WTC11 (cell line): ENCODE measurements at regions of chr10 and their contacts with region 1.

Region 1: GRCh38 chr10:101840741-101841453 is 2.7 kb downstream of the KCNIP2 start:
- DNase-seq: peak; percentile 94
- ATAC-seq: peak; percentile 54
- H3K4me3 Mint-ChIP-seq: peak overlapping the region; percentile 91
- H3K27ac Mint-ChIP-seq: peak overlapping the region; percentile 79; the same call in 1 of the 2 replicates
- H3K4me1 Mint-ChIP-seq: peaks cover 38% of the 10 kb centered on the region
- H3K27me3 Mint-ChIP-seq: peaks cover 25% of the 10 kb centered on the region
- CTCF ChIP-seq: peak; percentile 93

Region 2: GRCh38 chr10:101629837-101630632 is 210.9 kb before region 1 on chr10:
- CTCF ChIA-PET with region 1: no interaction called
- POLR2A ChIA-PET with region 1: no interaction called
- DNase-seq: no peak
- ATAC-seq: no peak
- H3K4me3 Mint-ChIP-seq: no peak overlapping the region
- H3K27ac Mint-ChIP-seq: no peak overlapping the region
- H3K4me1 Mint-ChIP-seq: peaks cover 6% of the 10 kb centered on the region
- H3K27me3 Mint-ChIP-seq: no peaks in the 10 kb centered on the region; the same call in 1 of the 2 replicates
- CTCF ChIP-seq: no peak

Region 3: DNA sequence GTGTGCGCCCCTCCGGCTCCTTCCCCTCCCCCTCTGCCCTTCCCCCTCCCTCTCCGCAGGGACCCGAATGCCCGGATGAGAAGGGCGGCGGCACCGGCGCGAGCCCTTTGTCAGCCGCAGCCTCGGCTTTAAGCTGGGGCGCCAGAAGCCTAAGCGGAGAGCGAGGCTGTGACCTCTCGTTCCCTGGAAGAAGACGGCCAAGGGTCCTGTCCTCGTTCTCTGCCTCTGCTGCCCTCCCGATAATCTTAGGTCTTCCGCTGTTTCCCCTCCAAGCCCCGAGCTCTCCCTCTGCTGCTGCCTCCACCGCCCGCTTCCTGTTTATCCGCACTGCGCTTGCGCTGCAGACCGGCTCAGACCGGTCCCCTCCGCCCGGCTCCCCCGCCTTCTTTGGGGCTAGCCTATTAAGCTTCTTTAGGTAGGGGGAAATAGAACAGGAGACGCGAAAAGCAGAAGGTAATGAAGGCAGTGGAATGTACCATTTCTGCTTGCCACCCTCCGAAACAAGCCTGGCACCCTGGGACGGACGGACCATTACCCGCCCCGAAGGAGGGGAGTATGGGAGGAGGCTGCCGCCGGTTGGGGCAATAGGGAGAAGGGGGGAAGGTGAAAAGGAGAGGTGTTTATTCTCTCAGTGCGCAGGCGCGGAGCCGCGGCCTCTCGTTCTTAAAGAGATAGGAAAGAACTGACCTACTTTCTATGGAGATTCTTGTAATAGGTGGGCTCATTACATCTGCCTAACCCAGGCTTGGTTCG is 22.6 kb before region 1 on chr10 and contains the start of gene OGA:
- CTCF ChIA-PET with region 1: interaction called, 89 read pairs
- POLR2A ChIA-PET with region 1: interaction called, 34 read pairs
- DNase-seq: peak; percentile 98
- ATAC-seq: peak; percentile 91
- H3K4me3 Mint-ChIP-seq: peak within 1 kb of the TSS; percentile 88
- H3K27ac Mint-ChIP-seq: peak within 1 kb of the TSS; percentile 98
- H3K4me1 Mint-ChIP-seq: peaks cover 26% of the 10 kb centered on the region
- H3K27me3 Mint-ChIP-seq: no peaks in the 10 kb centered on the region
- CTCF ChIP-seq: no peak
- total RNA-seq, gene OGA: 110 to 111 TPM (median 110 TPM) in 3 replicates

Region 4: GRCh38 chr10:101879456-101880231 is 38.7 kb after region 1 on chr10:
- CTCF ChIA-PET with region 1: interaction called, 29 read pairs
- POLR2A ChIA-PET with region 1: interaction called, 4 read pairs
- DNase-seq: no peak
- ATAC-seq: no peak
- H3K4me3 Mint-ChIP-seq: no peak overlapping the region
- H3K27ac Mint-ChIP-seq: peak overlapping the region; percentile 17; the same call in 1 of the 2 replicates
- H3K4me1 Mint-ChIP-seq: peaks cover 12% of the 10 kb centered on the region
- H3K27me3 Mint-ChIP-seq: no peaks in the 10 kb centered on the region
- CTCF ChIP-seq: no peak

Region 5: DNA sequence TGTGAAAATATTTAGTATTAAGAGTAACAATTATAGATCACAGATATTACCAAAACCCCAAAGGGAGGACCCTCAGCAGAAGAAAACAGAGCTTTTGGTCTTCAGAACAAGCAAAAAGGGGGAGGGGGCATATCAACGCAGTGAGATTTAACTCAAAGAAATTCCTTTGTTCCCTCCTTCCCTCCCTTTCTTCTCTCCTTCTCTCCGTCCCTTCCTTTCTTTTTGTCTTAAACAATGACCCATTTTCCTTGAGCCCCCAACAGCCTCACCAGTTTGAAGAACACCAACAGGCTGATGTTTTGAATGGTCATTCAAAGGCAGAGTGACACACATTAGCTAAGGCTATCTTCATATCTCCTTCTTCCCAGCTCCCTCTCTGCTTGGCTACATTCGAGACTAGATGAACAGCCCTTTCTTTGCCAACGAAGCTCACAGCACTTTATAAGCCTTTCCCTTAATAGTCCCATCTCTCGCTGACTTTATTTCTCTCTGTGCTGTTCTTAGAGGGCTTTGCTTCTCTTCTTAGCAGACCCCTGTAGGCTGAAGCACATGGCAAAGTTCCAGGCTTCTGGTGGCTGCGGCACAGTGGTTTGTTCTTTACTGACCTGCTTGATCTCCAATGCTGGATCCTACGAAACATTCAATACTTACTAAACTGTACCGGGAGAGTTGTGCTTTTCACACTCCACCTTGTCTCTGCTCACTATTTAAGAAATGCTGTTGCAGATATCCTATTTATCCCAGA is 78.3 kb after region 1 on chr10:
- CTCF ChIA-PET with region 1: interaction called, 15 read pairs
- POLR2A ChIA-PET with region 1: no interaction called
- DNase-seq: no peak
- ATAC-seq: peak; percentile 34
- H3K4me3 Mint-ChIP-seq: no peak overlapping the region
- H3K27ac Mint-ChIP-seq: peak overlapping the region; percentile 90
- H3K4me1 Mint-ChIP-seq: peaks cover 26% of the 10 kb centered on the region
- H3K27me3 Mint-ChIP-seq: no peaks in the 10 kb centered on the region
- CTCF ChIP-seq: no peak

Region 6: GRCh38 chr10:101995451-101996063 is 154.7 kb after region 1 on chr10:
- CTCF ChIA-PET with region 1: interaction called, 14 read pairs
- POLR2A ChIA-PET with region 1: no interaction called
- DNase-seq: no peak
- ATAC-seq: no peak
- H3K4me3 Mint-ChIP-seq: no peak overlapping the region
- H3K27ac Mint-ChIP-seq: no peak overlapping the region
- H3K4me1 Mint-ChIP-seq: no peaks in the 10 kb centered on the region
- H3K27me3 Mint-ChIP-seq: no peaks in the 10 kb centered on the region
- CTCF ChIP-seq: no peak

Region 7: DNA sequence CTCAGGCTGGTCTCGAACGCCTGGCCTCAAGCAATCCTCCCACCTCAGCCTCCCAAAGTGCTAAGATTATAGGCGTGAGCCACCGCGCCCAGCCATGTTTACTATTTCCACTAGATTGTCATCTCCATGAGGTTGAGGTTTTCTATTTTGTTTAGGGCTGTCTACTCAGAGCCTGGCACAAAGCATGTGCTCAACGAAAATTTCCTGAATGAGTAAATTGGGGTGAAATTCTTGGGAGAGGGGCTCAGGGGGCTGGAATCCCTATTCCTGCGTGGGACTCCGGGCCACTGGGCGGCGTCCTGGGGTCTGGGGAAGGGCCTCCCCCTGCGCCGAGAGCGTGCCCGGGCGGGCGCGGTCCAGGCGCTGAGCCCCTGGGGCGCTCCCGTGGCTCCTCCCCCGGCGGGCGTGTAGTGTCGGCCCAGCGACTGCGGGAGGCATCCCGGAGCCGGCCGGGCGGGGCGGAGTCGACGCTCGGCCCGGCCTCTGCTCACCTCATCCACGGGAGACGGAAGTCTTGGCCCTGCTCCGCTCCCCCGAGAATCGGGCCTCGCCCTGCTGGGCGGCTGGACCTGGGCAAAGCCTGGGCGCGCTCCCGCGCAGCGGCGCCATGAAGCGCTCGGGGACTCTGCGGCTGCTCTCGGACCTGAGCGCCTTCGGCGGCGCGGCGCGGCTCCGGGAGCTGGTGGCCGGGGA is 224.1 kb after region 1 on chr10 and contains the start of gene HPS6:
- CTCF ChIA-PET with region 1: interaction called, 134 read pairs
- POLR2A ChIA-PET with region 1: no interaction called
- DNase-seq: peak; percentile 74
- ATAC-seq: peak; percentile 83
- H3K4me3 Mint-ChIP-seq: peak within 1 kb of the TSS; percentile 81
- H3K27ac Mint-ChIP-seq: peak within 1 kb of the TSS; percentile 67
- H3K4me1 Mint-ChIP-seq: peaks cover 15% of the 10 kb centered on the region
- H3K27me3 Mint-ChIP-seq: peaks cover 22% of the 10 kb centered on the region
- CTCF ChIP-seq: no peak
- total RNA-seq, gene HPS6: 18.7 to 20.6 TPM (median 20.6 TPM) in 3 replicates